Activated CD8-positive, alpha-beta T cell treated with anti-CD3 and anti-CD28 coated beads for 36 hours (primary cell): ENCODE measurements at regions of chr17 and their contacts with region 1.

Region 1: GRCh38 chr17:74972107-74972972 is at the start of gene HID1:
- DNase-seq: peak; percentile 81
- ATAC-seq: peak; percentile 92
- H3K4me3 Mint-ChIP-seq: peak within 1 kb of the TSS; percentile 70
- H3K27ac Mint-ChIP-seq: no peak within 1 kb of the TSS
- H3K4me1 Mint-ChIP-seq: peaks cover 11% of the 10 kb centered on the region
- H3K27me3 Mint-ChIP-seq: peaks cover 12% of the 10 kb centered on the region
- CTCF ChIP-seq: no peak
- total RNA-seq, gene HID1: 1.4 to 1.7 TPM

Region 2: GRCh38 chr17:74941128-74942014 is 31.0 kb before region 1 on chr17:
- CTCF ChIA-PET with region 1: no interaction called
- POLR2A ChIA-PET with region 1: no interaction called
- intact Hi-C with region 1: no loop called
- DNase-seq: no peak
- ATAC-seq: no peak
- H3K4me3 Mint-ChIP-seq: no peak overlapping the region
- H3K27ac Mint-ChIP-seq: no peak overlapping the region
- H3K4me1 Mint-ChIP-seq: no peaks in the 10 kb centered on the region
- H3K27me3 Mint-ChIP-seq: peaks cover 32% of the 10 kb centered on the region
- CTCF ChIP-seq: no peak

Region 3: DNA sequence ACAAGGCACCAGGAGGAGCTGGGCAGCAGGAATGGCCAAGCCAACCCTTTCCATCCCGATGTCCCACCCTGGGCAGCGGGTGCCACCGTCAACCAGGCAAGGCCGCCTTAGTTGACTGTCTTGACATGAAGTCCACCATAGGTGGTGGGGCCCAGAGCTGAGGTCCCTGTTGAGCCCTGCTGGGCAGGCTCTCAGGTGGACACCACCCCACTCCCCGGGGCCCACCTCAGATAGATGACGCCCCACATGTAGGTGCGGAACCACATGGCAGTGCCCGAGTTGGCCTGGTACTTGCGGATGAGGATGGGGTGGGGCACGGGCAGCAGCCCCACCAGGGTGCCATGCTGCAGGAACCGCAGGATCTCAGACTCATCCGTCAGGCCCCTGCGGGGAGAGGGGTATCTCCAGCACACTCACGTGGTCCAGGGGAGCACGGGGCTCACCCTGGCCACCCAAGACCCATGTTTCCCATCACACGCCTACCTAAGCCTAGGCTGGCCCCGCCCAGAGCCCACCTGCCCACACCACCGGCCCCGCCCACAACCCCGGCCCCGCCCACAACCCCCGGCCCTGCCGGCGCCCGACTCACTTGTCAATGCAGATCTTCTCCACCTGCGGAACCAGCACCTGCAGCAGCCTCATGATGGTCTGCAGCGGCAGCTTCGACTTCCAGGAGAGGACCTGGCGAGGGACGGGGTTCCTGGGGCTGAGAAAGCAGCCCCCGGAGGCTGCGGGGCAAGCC is 20.5 kb before region 1 on chr17:
- CTCF ChIA-PET with region 1: no interaction called
- POLR2A ChIA-PET with region 1: no interaction called
- intact Hi-C with region 1: no loop called
- DNase-seq: no peak
- ATAC-seq: no peak
- H3K4me3 Mint-ChIP-seq: no peak overlapping the region
- H3K27ac Mint-ChIP-seq: no peak overlapping the region
- H3K4me1 Mint-ChIP-seq: no peaks in the 10 kb centered on the region
- H3K27me3 Mint-ChIP-seq: no peaks in the 10 kb centered on the region
- CTCF ChIP-seq: no peak

Region 4: GRCh38 chr17:74987418-74987908 is 15.1 kb after region 1 on chr17 and contains the start of gene CDR2L:
- CTCF ChIA-PET with region 1: interaction called, 13 read pairs
- POLR2A ChIA-PET with region 1: interaction called, 3 read pairs
- intact Hi-C with region 1: no loop called
- DNase-seq: peak; percentile 94
- ATAC-seq: peak; percentile 99
- H3K4me3 Mint-ChIP-seq: peak within 1 kb of the TSS; percentile 80
- H3K27ac Mint-ChIP-seq: no peak within 1 kb of the TSS
- H3K4me1 Mint-ChIP-seq: peaks cover 8% of the 10 kb centered on the region
- H3K27me3 Mint-ChIP-seq: peaks cover 19% of the 10 kb centered on the region
- CTCF ChIP-seq: peak; percentile 9
- total RNA-seq, gene CDR2L: 0.59 to 0.94 TPM

Region 5: GRCh38 chr17:75047398-75048098 is 75.2 kb after region 1 on chr17:
- CTCF ChIA-PET with region 1: no interaction called
- POLR2A ChIA-PET with region 1: no interaction called
- intact Hi-C with region 1: no loop called
- DNase-seq: peak; percentile 54
- ATAC-seq: no peak
- H3K4me3 Mint-ChIP-seq: peak overlapping the region; percentile 98
- H3K27ac Mint-ChIP-seq: peak overlapping the region; percentile 90
- H3K4me1 Mint-ChIP-seq: peaks cover 40% of the 10 kb centered on the region
- H3K27me3 Mint-ChIP-seq: no peaks in the 10 kb centered on the region
- CTCF ChIP-seq: no peak

Region 6: DNA sequence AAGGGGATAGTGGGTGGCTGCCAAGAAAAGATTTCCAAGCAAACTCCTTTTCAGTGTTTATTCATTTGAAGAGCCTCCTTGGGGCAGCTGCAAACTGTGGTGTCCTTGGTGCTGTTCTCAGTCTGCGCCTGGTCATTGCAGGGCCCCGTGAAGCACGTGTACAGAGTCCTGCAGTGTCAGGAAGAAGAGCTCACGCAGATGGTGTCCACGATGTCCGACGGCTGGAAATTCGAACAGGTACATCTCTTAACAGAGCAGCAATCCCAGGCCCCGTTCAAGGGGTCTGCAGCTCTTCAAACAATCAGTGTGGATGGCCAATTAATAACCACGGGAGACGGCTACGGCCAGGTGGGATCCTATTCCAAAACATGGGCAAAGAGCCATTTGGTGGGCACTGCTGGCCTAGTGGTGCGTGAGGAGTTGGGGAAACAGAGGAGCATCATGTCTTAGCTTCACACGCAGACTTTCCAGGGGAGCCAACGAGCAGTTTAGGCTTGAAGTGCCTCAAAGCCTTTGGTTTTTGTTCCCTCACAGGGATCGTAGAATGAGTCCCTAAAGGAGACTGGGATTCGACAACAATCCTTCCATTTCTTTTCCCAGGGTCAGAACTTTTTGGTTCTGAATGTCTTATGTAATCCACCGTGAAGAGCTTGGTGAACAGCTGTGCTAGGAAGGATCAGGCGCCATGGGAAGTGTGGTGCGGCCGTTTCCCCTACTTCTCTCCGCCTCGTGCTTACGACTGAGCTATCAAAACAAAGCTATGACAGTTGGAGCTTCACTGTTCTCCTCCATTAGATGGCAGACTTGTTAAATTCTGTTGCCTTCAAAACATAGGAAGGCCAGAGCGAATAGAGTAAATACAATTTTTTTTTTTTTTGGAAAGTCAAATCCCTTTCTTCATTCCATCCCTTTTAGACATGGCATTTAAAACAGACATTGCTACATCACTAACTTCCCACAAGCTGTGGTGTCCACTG is 87.3 kb after region 1 on chr17:
- CTCF ChIA-PET with region 1: no interaction called
- POLR2A ChIA-PET with region 1: no interaction called
- intact Hi-C with region 1: no loop called
- DNase-seq: no peak
- ATAC-seq: no peak
- H3K4me3 Mint-ChIP-seq: no peak overlapping the region
- H3K27ac Mint-ChIP-seq: no peak overlapping the region
- H3K4me1 Mint-ChIP-seq: peaks cover 8% of the 10 kb centered on the region
- H3K27me3 Mint-ChIP-seq: no peaks in the 10 kb centered on the region
- CTCF ChIP-seq: no peak